Endothelial cell of umbilical vein (primary cell): ENCODE measurements at regions of chr2 and their contacts with region 1.

Region 1: DNA sequence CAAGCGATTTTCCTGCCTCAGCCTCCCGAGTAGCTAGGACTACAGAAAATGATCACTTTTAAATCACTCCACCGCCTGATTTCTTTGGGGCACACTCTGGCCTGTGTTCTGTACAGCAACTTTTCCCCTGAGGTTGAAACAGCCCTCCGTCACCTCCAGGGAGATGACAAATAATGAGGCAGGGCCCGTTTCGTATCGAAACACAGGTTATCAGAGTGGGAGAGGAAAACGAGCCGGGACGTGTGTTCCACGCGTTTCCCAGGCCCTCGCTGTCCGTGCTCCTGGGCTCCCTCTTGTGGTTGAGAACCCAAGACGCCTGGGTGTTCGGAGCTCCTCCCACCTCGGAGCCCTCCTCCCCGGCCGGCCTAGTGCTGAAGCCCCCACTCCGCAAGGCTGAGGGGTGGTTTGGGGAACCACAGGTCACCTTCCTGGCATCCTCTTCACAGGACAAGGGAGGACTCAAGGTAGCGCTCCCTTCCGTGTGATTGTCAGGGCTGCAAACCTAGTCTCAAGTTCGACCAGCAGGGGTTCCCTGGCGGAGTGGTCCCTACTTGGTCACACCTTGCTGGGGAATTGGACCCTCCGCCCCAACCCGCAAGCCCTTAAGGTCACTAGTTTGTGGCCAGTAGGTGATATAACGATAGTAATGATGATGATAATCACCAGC is 12.8 kb downstream of the ATP6V1B1 start:
- DNase-seq: peak; percentile 78
- H3K4me3 ChIP-seq: peak overlapping the region in 2 of 3 experiments; percentile 26 to 36
- H3K27ac ChIP-seq: no peak overlapping the region
- H3K4me1 ChIP-seq: peaks cover 13% of the 10 kb centered on the region
- H3K27me3 ChIP-seq: peaks cover 4 to 9% of the 10 kb centered on the region in 2 experiments
- CTCF ChIP-seq: peak; percentile 90 to 94
- POLR2A ChIP-seq: no peak

Region 2: GRCh38 chr2:70516596-70516995 is 431.9 kb before region 1 on chr2:
- CTCF ChIA-PET with region 1: no interaction called
- POLR2A ChIA-PET with region 1: no interaction called
- dilution Hi-C with region 1: no loop called
- intact Hi-C with region 1: no loop called
- DNase-seq: no peak
- H3K4me3 ChIP-seq: no peak overlapping the region
- H3K27ac ChIP-seq: no peak overlapping the region
- H3K4me1 ChIP-seq: no peaks in the 10 kb centered on the region
- H3K27me3 ChIP-seq: no peaks in the 10 kb centered on the region
- CTCF ChIP-seq: no peak
- POLR2A ChIP-seq: no peak

Region 3: GRCh38 chr2:70789304-70790135 is 158.9 kb before region 1 on chr2:
- CTCF ChIA-PET with region 1: interaction called, 137 read pairs
- POLR2A ChIA-PET with region 1: no interaction called
- dilution Hi-C with region 1: no loop called
- intact Hi-C with region 1: loop called (anchors 1 kb)
- DNase-seq: peak; percentile 77
- H3K4me3 ChIP-seq: no peak overlapping the region
- H3K27ac ChIP-seq: no peak overlapping the region
- H3K4me1 ChIP-seq: peaks cover 4% of the 10 kb centered on the region
- H3K27me3 ChIP-seq: peaks cover 45 to 69% of the 10 kb centered on the region in 2 experiments
- CTCF ChIP-seq: peak; percentile 70 to 80
- POLR2A ChIP-seq: no peak

Region 4: GRCh38 chr2:70861777-70862625 is 86.5 kb before region 1 on chr2:
- CTCF ChIA-PET with region 1: interaction called, 328 read pairs
- POLR2A ChIA-PET with region 1: no interaction called
- dilution Hi-C with region 1: no loop called
- intact Hi-C with region 1: loop called (anchors 1 kb)
- DNase-seq: peak; percentile 79
- H3K4me3 ChIP-seq: no peak overlapping the region
- H3K27ac ChIP-seq: no peak overlapping the region
- H3K4me1 ChIP-seq: no peaks in the 10 kb centered on the region
- H3K27me3 ChIP-seq: peaks cover 36 to 50% of the 10 kb centered on the region in 2 experiments
- CTCF ChIP-seq: peak; percentile 95 to 99
- POLR2A ChIP-seq: no peak

Region 5: GRCh38 chr2:70926042-70926441 is 22.4 kb before region 1 on chr2:
- CTCF ChIA-PET with region 1: interaction called, 36 read pairs
- POLR2A ChIA-PET with region 1: no interaction called
- dilution Hi-C with region 1: no loop called
- intact Hi-C with region 1: loop called (anchors 1 kb)
- DNase-seq: no peak
- H3K4me3 ChIP-seq: no peak overlapping the region
- H3K27ac ChIP-seq: no peak overlapping the region
- H3K4me1 ChIP-seq: peaks cover 16% of the 10 kb centered on the region
- H3K27me3 ChIP-seq: peaks cover 3% of the 10 kb centered on the region in 2 experiments
- CTCF ChIP-seq: no peak
- POLR2A ChIP-seq: no peak

Region 6: DNA sequence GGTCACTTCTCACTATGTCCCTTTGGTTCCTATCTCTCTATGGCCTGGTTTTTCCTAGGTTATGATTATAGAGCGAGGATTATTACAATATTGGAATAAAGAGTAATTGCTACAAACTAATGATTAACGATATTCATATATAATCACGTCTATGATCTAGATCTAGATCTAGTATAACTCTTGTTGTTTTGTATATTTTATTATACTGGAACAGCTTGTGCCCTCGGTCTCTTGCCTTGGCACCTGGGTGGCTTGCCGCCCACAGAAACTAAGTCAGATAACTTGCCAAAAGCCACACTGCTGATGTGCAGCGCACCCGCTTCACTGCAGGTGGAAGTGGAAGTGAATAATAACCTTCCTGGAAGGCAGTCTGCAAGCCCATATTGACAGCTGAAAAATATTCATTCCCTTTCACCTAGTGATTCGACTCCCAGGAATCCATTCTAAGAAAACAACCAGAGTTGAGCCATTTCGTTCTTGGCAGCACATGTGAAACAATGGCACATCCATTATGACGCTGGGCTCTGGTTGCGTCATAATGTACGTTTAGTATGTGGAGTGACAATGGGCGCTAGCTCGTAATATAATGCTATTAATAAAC is 29.2 kb after region 1 on chr2:
- CTCF ChIA-PET with region 1: interaction called, 21 read pairs
- POLR2A ChIA-PET with region 1: no interaction called
- dilution Hi-C with region 1: no loop called
- intact Hi-C with region 1: no loop called
- DNase-seq: peak; percentile 35
- H3K4me3 ChIP-seq: peak overlapping the region in 1 of 3 experiments; percentile 56
- H3K27ac ChIP-seq: peak overlapping the region; percentile 85
- H3K4me1 ChIP-seq: peaks cover 13% of the 10 kb centered on the region
- H3K27me3 ChIP-seq: peaks cover 5 to 6% of the 10 kb centered on the region in 2 experiments
- CTCF ChIP-seq: no peak
- POLR2A ChIP-seq: no peak

Region 7: GRCh38 chr2:72271766-72272641 is 1323.5 kb after region 1 on chr2:
- CTCF ChIA-PET with region 1: no interaction called
- POLR2A ChIA-PET with region 1: no interaction called
- dilution Hi-C with region 1: no loop called
- intact Hi-C with region 1: no loop called
- DNase-seq: peak; percentile 90
- H3K4me3 ChIP-seq: no peak overlapping the region
- H3K27ac ChIP-seq: no peak overlapping the region
- H3K4me1 ChIP-seq: peaks cover 6% of the 10 kb centered on the region
- H3K27me3 ChIP-seq: no peaks in the 10 kb centered on the region
- CTCF ChIP-seq: no peak
- POLR2A ChIP-seq: no peak